ENCODE measurements at regions of chr17 and their contacts with region 1.

Region 1: GRCh38 chr17:43316522-43317142 is 82.2 kb upstream of the ARL4D start:
- H3K4me3 ChIP-seq: no peak overlapping the region
- H3K27ac ChIP-seq: no peak overlapping the region
- H3K4me1 ChIP-seq: no peaks in the 10 kb centered on the region
- CTCF ChIP-seq: no peak

Region 2: DNA sequence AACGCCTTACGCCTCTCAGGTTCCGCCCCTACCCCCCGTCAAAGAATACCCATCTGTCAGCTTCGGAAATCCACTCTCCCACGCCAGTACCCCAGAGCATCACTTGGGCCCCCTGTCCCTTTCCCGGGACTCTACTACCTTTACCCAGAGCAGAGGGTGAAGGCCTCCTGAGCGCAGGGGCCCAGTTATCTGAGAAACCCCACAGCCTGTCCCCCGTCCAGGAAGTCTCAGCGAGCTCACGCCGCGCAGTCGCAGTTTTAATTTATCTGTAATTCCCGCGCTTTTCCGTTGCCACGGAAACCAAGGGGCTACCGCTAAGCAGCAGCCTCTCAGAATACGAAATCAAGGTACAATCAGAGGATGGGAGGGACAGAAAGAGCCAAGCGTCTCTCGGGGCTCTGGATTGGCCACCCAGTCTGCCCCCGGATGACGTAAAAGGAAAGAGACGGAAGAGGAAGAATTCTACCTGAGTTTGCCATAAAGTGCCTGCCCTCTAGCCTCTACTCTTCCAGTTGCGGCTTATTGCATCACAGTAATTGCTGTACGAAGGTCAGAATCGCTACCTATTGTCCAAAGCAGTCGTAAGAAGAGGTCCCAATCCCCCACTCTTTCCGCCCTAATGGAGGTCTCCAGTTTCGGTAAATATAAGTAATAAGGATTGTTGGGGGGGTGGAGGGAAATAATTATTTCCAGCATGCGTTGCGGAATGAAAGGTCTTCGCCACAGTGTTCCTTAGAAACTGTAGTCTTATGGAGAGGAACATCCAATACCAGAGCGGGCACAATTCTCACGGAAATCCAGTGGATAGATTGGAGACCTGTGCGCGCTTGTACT is 191.3 kb before region 1 on chr17 and contains the start of gene BRCA1:
- CTCF ChIA-PET with region 1: no interaction called
- POLR2A ChIA-PET with region 1: interaction called, 13 read pairs
- H3K4me3 ChIP-seq: peak within 1 kb of the TSS; percentile 75
- H3K27ac ChIP-seq: peak within 1 kb of the TSS; percentile 69
- H3K4me1 ChIP-seq: peaks cover 4% of the 10 kb centered on the region; the same call in 1 of the 2 replicates
- CTCF ChIP-seq: no peak

Region 3: GRCh38 chr17:43212641-43213490 is 103.8 kb before region 1 on chr17:
- CTCF ChIA-PET with region 1: no interaction called
- POLR2A ChIA-PET with region 1: interaction called, 14 read pairs
- H3K4me3 ChIP-seq: no peak overlapping the region
- H3K27ac ChIP-seq: no peak overlapping the region
- H3K4me1 ChIP-seq: no peaks in the 10 kb centered on the region
- CTCF ChIP-seq: no peak

Region 4: GRCh38 chr17:43338886-43339516 is 22.4 kb after region 1 on chr17:
- CTCF ChIA-PET with region 1: interaction called, 6 read pairs
- POLR2A ChIA-PET with region 1: interaction called, 10 read pairs
- H3K4me3 ChIP-seq: no peak overlapping the region
- H3K27ac ChIP-seq: no peak overlapping the region
- H3K4me1 ChIP-seq: 0 out of 2 replicates have a peak, but pooled peaks cover 3% of the 10 kb centered on the region
- CTCF ChIP-seq: peak; percentile 58